ENCODE measurements at regions of chr5 and their contacts with region 1.

Region 1: GRCh38 chr5:14264604-14265316 is 121.6 kb downstream of the TRIO start:
- DNase-seq: peak; percentile 93
- H3K4me3 Mint-ChIP-seq: peak overlapping the region; percentile 57
- H3K27ac Mint-ChIP-seq: no peak overlapping the region
- H3K4me1 Mint-ChIP-seq: peaks cover 74% of the 10 kb centered on the region
- H3K27me3 Mint-ChIP-seq: no peaks in the 10 kb centered on the region
- CTCF ChIP-seq: no peak

Region 2: GRCh38 chr5:14144586-14145434 is 120.0 kb before region 1 on chr5:
- CTCF ChIA-PET with region 1: interaction called, 8 read pairs
- intact Hi-C with region 1: loop called (anchors 2 kb)
- DNase-seq: peak; percentile 66
- H3K4me3 Mint-ChIP-seq: peak overlapping the region; percentile 81
- H3K27ac Mint-ChIP-seq: peak overlapping the region; percentile 84
- H3K4me1 Mint-ChIP-seq: peaks cover 38% of the 10 kb centered on the region
- H3K27me3 Mint-ChIP-seq: no peaks in the 10 kb centered on the region
- CTCF ChIP-seq: no peak

Region 3: GRCh38 chr5:14212838-14213237 is 51.9 kb before region 1 on chr5:
- CTCF ChIA-PET with region 1: no interaction called
- intact Hi-C with region 1: loop called (anchors 5 kb)
- DNase-seq: no peak
- H3K4me3 Mint-ChIP-seq: peak overlapping the region; percentile 11
- H3K27ac Mint-ChIP-seq: peak overlapping the region; percentile 49
- H3K4me1 Mint-ChIP-seq: peaks cover 90% of the 10 kb centered on the region
- H3K27me3 Mint-ChIP-seq: no peaks in the 10 kb centered on the region
- CTCF ChIP-seq: no peak